Activated T-helper 1 cell treated with anti-CD3 and anti-CD28 coated beads, Interleukin-12 subunit alpha, Interleukin-12 subunit beta, Interleukin-2, Interleukin-4 antibody, amounts not matched to agents 30 ng/mL and 10 ng/mL and 1 ng/mL, durations not matched to agents 14 hours and 24 hours and 36 hours (primary cell): ENCODE measurements at regions of chr10 and their contacts with region 1.

Region 1: DNA sequence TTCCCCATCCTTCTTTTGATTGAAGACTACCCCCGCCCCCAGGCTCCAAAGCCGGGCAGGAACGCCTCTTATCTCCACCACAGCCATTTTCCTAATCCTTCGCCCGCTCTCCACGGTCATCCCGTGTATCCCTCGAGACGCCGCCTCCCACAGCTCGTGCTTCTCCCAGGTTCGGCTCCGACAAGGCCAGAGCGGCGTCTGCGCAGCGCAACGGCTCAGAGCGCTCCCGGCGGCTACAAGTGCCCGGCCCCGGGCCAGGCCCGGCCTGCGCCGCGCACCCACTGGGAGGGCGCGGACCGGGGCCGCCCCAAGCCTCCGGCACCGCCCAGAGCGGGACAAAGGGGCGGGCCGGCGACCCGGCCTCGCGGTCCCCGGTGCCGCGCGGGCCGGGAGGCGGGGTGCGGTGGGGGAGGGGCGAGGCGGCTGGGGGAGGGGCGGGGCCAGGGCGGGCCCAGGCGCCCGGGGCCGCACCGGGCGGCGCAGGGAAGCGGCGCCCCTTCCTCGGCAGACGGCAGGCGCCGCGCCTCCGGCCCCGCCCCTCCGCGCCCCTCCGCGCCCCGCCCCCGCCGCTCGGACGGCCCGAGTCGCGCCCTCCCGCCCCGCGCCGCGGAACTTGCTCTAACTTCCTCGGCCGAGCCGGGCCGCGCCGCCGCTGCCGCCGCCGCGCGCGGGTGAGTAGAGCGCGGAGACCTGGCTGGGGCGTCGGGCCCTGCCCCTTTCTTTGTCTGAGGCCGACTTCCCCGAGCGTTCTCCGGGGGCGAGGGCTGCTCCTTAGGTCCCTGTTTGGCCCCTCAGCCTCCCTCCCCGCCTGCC is at the start of gene TSPAN14:
- DNase-seq: peak; percentile 73
- H3K4me3 Mint-ChIP-seq: peak within 1 kb of the TSS; percentile 98
- H3K27ac Mint-ChIP-seq: peak within 1 kb of the TSS; percentile 88
- H3K4me1 Mint-ChIP-seq: peaks cover 49% of the 10 kb centered on the region
- H3K27me3 Mint-ChIP-seq: no peaks in the 10 kb centered on the region
- total RNA-seq, gene TSPAN14: 75.4 and 81.9 TPM in 2 replicates

Region 2: DNA sequence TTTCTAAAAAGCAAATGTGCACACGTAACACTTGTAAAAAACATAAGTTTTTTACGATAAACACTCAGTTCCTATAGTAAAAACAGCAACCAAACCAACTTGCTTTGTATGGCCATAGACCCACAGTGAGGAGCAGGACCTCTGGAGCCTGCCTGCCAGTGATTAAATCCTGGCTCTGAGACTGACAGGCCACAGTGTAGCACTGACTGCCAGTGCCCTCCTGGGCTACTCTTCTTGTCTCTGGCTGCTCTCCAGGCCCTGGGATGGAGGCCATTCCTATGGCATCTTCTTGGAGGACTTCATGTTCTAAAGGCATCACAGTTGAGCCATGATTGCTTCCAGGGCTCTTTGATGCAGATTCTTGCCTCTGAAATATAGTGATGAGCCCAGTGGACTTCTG is 398.1 kb before region 1 on chr10:
- intact Hi-C with region 1: no loop called
- DNase-seq: no peak
- H3K4me3 Mint-ChIP-seq: no peak overlapping the region
- H3K27ac Mint-ChIP-seq: no peak overlapping the region
- H3K4me1 Mint-ChIP-seq: no peaks in the 10 kb centered on the region
- H3K27me3 Mint-ChIP-seq: peaks cover 3% of the 10 kb centered on the region

Region 3: GRCh38 chr10:80078448-80079311 is 375.2 kb before region 1 on chr10 and contains the start of gene TMEM254:
- intact Hi-C with region 1: loop called (anchors 10 kb)
- DNase-seq: peak; percentile 85
- H3K4me3 Mint-ChIP-seq: peak within 1 kb of the TSS; percentile 98
- H3K27ac Mint-ChIP-seq: peak within 1 kb of the TSS; percentile 92
- H3K4me1 Mint-ChIP-seq: peaks cover 29% of the 10 kb centered on the region
- H3K27me3 Mint-ChIP-seq: no peaks in the 10 kb centered on the region
- total RNA-seq, gene TMEM254: 10.8 and 12.4 TPM in 2 replicates

Region 4: DNA sequence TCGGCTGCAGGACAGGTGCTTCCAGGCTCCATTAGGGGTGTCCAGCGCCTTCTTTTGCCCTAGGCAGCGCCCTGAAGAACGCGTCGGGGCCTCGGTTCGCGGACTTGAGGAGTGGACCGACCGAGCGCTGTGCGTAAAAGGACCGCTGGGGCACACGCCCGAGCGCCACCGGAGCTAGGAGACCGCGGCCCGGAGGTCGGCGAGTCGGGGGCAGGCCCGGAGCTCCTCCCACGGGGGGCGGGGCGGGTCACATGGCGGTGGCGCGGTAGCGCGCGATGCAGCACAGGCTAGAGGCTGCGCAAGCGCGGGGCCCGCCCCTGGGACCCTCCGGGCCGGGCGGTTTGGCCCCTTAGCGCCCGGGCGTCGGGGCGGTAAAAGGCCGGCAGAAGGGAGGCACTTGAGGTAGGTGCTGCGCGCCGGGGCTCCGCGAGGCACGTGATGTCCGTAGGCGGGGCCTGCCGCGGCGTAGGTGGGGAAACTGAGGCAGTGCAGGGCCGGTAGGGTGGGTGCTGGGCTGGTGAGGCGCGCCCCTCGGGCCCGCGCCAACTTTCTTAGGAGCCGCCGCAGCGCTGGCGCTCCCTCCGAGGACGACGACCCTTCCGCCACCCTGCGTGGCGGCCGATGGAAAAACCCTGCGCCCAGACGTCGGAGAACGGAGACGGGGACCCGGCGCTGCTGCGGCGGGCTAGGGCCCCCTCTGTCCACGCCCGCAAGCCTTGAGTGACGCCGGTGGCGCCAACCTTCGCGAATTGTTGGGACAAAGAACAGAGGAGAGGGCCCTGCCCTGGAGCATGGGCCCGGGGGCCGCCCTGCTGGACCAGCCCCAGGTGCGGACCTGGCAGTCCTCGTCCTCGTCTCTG is 45.4 kb before region 1 on chr10 and contains the start of gene PRXL2A:
- intact Hi-C with region 1: loop called (anchors 1 kb)
- DNase-seq: peak; percentile 81
- H3K4me3 Mint-ChIP-seq: peak within 1 kb of the TSS; percentile 89
- H3K27ac Mint-ChIP-seq: peak within 1 kb of the TSS; percentile 93
- H3K4me1 Mint-ChIP-seq: peaks cover 28% of the 10 kb centered on the region
- H3K27me3 Mint-ChIP-seq: peaks cover 20% of the 10 kb centered on the region
- total RNA-seq, gene PRXL2A: 11.9 and 13.2 TPM in 2 replicates

Region 5: DNA sequence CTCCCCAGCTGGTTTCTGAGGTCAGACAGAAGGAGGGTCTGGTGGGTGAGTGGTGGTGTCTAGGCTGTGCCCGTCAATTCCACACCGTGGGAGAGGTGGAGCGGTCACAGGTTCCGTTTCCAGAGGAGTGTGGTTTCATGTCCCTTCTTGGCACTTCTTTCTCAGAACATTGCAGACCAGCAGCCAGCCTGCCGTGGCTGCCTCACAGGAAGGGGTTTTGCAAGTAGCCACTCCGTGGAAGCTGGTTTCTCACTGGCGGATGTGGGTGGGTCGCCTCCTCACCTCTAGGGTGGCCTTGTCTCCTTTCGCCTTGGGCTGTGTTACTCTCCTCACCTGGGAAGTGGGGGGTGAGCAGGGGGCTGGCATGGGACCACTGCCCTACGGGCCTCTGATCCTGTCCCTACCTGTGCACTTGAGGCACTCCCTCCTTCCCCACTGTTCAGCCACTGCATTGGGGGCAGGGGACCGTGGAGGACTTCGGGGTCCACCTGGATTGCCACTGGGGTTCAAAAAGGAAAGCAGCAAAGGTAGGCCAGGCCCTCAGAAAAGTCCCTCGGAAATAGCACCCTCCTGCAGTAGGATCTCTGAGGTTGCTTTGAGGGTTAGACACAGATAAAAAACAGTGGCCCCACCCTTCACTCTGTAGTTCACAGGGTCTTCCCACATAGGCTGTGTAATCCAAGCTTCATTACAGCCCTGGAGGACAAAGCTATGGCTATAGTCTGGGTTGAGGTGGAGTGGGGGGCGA is 34.1 kb after region 1 on chr10:
- intact Hi-C with region 1: loop called (anchors 1 kb)
- DNase-seq: peak; percentile 63
- H3K4me3 Mint-ChIP-seq: peak overlapping the region; percentile 71
- H3K27ac Mint-ChIP-seq: peak overlapping the region; percentile 92
- H3K4me1 Mint-ChIP-seq: peaks cover 98% of the 10 kb centered on the region
- H3K27me3 Mint-ChIP-seq: no peaks in the 10 kb centered on the region

Region 6: DNA sequence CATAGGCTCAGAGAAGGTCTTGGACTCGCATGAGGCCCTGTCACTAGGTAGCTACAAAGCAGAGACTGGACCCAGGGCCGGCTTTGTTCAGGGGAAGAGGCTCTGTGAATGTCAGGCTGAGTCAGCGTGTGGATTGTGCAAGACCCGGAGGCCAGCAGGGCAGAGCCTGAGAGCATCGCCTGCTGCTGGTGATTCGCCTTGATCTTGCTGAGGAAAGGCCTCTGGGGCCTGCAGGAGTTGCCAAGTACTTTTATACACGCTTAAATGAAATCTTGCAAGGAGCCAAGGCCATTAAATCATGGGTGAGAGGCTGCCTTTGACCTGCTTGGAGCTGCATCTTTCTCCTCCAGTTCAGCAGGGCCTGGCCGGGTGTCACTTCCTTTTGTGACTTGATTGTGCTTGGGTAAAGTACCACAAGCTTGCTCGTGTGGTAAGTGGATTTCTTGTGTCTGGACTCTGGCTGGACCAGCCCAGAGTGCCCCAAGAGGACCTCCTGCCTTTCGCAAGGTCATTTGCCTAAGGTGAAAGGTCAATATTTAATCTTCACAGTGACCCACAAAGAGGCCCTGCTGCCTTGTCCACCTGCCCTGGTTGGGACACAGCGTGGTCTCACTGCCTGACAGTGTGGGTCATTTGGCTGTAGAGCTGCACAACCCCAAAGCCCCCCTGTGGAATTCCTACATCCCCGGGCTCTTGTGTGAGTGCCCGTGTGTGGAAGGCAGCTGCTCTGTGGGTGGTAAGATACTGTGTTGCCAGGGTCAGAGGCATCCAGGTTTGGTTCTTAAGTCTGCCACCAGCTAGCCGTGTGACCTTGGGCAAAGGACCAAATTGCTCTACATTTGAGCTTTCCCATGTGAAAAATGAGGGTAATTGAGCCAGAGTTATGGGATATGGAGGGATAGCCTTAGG is 45.2 kb after region 1 on chr10:
- intact Hi-C with region 1: loop called (anchors 1 kb)
- DNase-seq: peak; percentile 40
- H3K4me3 Mint-ChIP-seq: peak overlapping the region; percentile 74
- H3K27ac Mint-ChIP-seq: peak overlapping the region; percentile 89
- H3K4me1 Mint-ChIP-seq: peaks cover 92% of the 10 kb centered on the region
- H3K27me3 Mint-ChIP-seq: no peaks in the 10 kb centered on the region

Region 7: GRCh38 chr10:80504158-80504811 is 50.4 kb after region 1 on chr10:
- intact Hi-C with region 1: loop called (anchors 1 kb)
- DNase-seq: no peak
- H3K4me3 Mint-ChIP-seq: no peak overlapping the region
- H3K27ac Mint-ChIP-seq: peak overlapping the region; percentile 86
- H3K4me1 Mint-ChIP-seq: peaks cover 67% of the 10 kb centered on the region
- H3K27me3 Mint-ChIP-seq: no peaks in the 10 kb centered on the region

Region 8: DNA sequence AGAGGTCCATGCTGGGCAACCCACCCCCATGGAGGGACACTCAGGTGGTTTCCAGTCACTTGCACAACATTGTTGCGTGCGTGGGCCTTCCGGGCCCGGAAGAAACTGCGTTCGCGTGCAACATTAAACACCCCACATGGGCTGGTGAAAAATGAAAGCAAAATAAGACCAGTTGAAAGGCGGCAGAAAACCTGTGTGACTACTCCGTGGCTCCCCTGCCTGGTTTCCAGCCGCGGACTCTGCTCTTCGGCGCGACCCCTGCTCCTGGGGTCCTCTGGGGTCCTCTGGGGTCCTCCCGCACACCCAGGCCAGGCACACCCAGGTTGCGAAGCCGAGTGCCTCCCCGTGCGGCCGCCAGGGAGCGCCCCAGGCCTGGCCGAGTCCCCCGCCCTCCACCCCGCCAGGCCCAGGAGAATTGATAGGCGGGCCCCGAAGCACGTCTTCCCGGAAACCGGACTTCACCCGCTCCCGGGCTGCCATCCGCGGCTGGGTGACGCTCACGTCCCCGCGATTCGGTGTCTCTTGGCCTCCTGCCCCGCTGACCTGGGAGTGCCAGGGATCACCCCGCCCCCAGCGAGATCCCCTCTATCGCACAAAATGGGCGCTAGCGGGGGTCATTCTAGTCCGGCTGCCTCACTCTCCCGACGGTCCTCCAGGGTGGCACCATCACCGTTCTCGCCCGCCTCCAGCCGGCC is 81.9 kb after region 1 on chr10:
- intact Hi-C with region 1: no loop called
- DNase-seq: peak; percentile 71
- H3K4me3 Mint-ChIP-seq: peak overlapping the region; percentile 95
- H3K27ac Mint-ChIP-seq: peak overlapping the region; percentile 100
- H3K4me1 Mint-ChIP-seq: peaks cover 49% of the 10 kb centered on the region
- H3K27me3 Mint-ChIP-seq: no peaks in the 10 kb centered on the region